CD4-positive, alpha-beta memory T cell (primary cell): ENCODE measurements at regions of chr6 and their contacts with region 1.

Region 1: GRCh38 chr6:168895102-168895812 is 358.4 kb downstream of the THBS2 start:
- DNase-seq: peak; percentile 71 to 78 (median 74)
- H3K4me3 ChIP-seq: no peak overlapping the region
- H3K4me3 Mint-ChIP-seq: peak overlapping the region; percentile 40 to 87 (median 60)
- H3K27ac ChIP-seq: no peak overlapping the region
- H3K27ac Mint-ChIP-seq: peak overlapping the region in 5 of 7 donors; percentile 8 to 77 (median 53)
- H3K4me1 ChIP-seq: peaks cover 8% of the 10 kb centered on the region
- H3K4me1 Mint-ChIP-seq: peaks cover 9 to 28% (median 11%) of the 10 kb centered on the region in 4 donors
- H3K27me3 ChIP-seq: no peaks in the 10 kb centered on the region
- H3K27me3 Mint-ChIP-seq: peaks cover 3% of the 10 kb centered on the region in 2 donors

Region 2: GRCh38 chr6:168884646-168885086 is 10.6 kb before region 1 on chr6:
- CTCF ChIA-PET with region 1: interaction called, 16 read pairs
- POLR2A ChIA-PET with region 1: no interaction called
- intact Hi-C with region 1: no loop called
- DNase-seq: peak; percentile 64 to 84 (median 81)
- H3K4me3 ChIP-seq: peak overlapping the region; percentile 79 to 85
- H3K4me3 Mint-ChIP-seq: peak overlapping the region; percentile 77 to 93 (median 92)
- H3K27ac ChIP-seq: peak overlapping the region; percentile 35
- H3K27ac Mint-ChIP-seq: peak overlapping the region; percentile 59 to 96 (median 93)
- H3K4me1 ChIP-seq: peaks cover 11% of the 10 kb centered on the region
- H3K4me1 Mint-ChIP-seq: peaks cover 5 to 15% (median 10%) of the 10 kb centered on the region in 4 donors
- H3K27me3 ChIP-seq: no peaks in the 10 kb centered on the region
- H3K27me3 Mint-ChIP-seq: no peaks in the 10 kb centered on the region

Region 3: DNA sequence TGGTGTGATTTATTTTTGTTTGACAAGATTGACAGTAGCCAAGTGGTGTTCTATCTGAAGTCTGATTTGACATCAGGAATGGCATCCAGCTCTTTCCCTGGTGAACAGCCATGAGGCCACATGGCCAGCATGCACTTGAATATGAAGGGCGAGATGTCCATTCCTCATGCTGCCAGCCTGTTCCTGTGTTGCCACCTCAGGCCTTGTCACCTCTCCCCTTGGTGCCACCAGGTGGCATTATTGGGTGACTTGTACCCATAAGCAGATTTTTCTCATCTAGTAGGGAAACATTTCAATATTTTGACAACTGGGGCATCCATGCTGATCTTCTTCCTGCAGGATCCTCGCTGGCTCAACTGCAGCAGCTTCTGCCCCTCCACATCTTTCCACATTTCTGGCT is 1055.3 kb after region 1 on chr6:
- CTCF ChIA-PET with region 1: no interaction called
- POLR2A ChIA-PET with region 1: no interaction called
- intact Hi-C with region 1: loop called (anchors 5 kb)
- DNase-seq: peak in 2 of 5 donors; percentile 15 to 22
- H3K4me3 ChIP-seq: no peak overlapping the region
- H3K4me3 Mint-ChIP-seq: no peak overlapping the region
- H3K27ac ChIP-seq: no peak overlapping the region
- H3K27ac Mint-ChIP-seq: no peak overlapping the region
- H3K4me1 ChIP-seq: no peaks in the 10 kb centered on the region
- H3K4me1 Mint-ChIP-seq: no peaks in the 10 kb centered on the region
- H3K27me3 ChIP-seq: no peaks in the 10 kb centered on the region
- H3K27me3 Mint-ChIP-seq: peaks cover 0 to under 1% of the 10 kb centered on the region in 2 donors